Activated CD4-positive, alpha-beta T cell treated with anti-CD3 and anti-CD28 coated beads, Interleukin-2, amount 10 ng/mL, durations not matched to agents 7 days and 5 days (primary cell): ENCODE measurements at regions of chr12 and their contacts with region 1.

Region 1: DNA sequence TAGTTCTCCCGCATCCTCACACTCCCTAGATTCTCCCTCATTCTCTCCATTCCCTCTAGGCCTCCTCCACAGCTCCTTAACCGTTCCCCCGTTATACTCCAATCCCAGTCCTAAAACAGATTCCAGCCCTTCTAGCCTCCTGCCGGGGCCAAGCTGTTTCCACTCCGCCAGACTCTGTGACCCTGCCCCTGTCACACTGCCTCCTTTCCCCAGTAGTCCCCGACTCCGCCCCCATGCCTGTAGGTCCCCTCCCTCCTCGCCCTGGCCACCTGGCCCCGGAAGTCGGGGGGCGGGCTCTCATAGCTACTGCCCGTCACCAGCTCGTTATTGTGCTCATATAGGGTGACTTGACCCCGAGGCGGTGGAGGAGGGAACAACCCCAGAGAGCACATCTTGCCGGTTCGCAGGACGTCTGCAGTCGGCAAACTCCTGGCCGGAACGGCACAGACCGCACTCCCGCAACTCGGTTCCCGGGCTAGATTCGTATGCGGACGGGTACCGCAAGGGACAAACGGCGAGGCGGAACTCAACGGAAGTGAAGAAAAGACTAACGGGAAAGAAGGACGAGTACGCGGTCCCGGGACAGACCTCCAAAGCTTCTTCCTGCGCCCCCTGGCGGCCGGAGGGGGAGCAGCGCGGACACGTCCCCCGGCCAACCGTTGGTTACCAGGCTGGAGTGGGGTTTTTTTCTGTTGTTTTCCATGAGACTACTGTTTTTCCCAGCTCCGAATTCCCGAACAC is at the start of gene AAAS:
- DNase-seq: peak; percentile 98
- H3K4me3 Mint-ChIP-seq: peak within 1 kb of the TSS; percentile 85
- H3K27ac Mint-ChIP-seq: peak within 1 kb of the TSS; percentile 93
- H3K4me1 Mint-ChIP-seq: peaks cover 49% of the 10 kb centered on the region
- H3K27me3 Mint-ChIP-seq: no peaks in the 10 kb centered on the region
- total RNA-seq, gene AAAS: 59.1 to 63.0 TPM

Region 2: GRCh38 chr12:53129170-53129569 is 192.1 kb before region 1 on chr12:
- CTCF ChIA-PET with region 1: no interaction called
- POLR2A ChIA-PET with region 1: no interaction called
- DNase-seq: no peak
- H3K4me3 Mint-ChIP-seq: no peak overlapping the region
- H3K27ac Mint-ChIP-seq: no peak overlapping the region
- H3K4me1 Mint-ChIP-seq: peaks cover 3% of the 10 kb centered on the region
- H3K27me3 Mint-ChIP-seq: peaks cover 4% of the 10 kb centered on the region

Region 3: GRCh38 chr12:53159195-53159839 is 161.9 kb before region 1 on chr12:
- CTCF ChIA-PET with region 1: interaction called, 18 read pairs
- POLR2A ChIA-PET with region 1: no interaction called
- DNase-seq: peak; percentile 93
- H3K4me3 Mint-ChIP-seq: no peak overlapping the region
- H3K27ac Mint-ChIP-seq: peak overlapping the region; percentile 26
- H3K4me1 Mint-ChIP-seq: peaks cover 9% of the 10 kb centered on the region
- H3K27me3 Mint-ChIP-seq: no peaks in the 10 kb centered on the region

Region 4: DNA sequence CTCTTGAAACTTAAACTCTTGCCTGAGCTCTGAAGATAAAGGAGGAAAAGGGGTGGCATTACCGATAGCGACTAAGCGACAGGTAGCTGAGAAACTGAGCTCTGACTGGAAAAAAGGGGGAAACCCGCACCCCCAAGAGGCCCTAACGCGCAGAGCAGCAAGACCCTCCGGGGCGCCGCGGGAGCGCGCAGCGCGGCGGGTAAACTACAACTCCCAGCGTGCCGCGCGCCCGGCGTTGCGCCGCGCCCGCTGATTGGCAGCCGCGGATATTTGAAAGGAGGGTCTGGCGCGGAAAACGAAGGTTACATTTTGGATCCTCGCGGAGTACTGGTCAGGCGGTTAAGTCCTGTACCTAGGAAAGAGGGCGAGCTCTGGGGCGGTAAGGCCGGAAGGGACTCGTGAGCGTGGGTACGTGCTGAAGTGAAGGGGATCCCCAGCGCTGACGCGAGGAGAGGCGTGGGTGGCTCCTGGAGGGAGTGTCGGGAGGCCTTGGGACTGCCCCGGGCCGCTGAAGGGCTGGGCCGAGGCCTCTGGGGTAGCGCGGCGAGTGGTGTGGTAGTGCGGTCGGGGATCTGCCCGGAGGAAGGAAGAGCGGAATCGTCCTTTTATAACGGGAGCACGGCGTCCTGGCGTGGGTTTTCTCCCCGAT is 53.1 kb before region 1 on chr12 and contains the start of gene ESPL1:
- CTCF ChIA-PET with region 1: interaction called, 27 read pairs
- POLR2A ChIA-PET with region 1: no interaction called
- DNase-seq: peak; percentile 85
- H3K4me3 Mint-ChIP-seq: peak within 1 kb of the TSS; percentile 99
- H3K27ac Mint-ChIP-seq: peak within 1 kb of the TSS; percentile 97
- H3K4me1 Mint-ChIP-seq: peaks cover 53% of the 10 kb centered on the region
- H3K27me3 Mint-ChIP-seq: no peaks in the 10 kb centered on the region
- total RNA-seq, gene ESPL1: 107 to 125 TPM

Region 5: DNA sequence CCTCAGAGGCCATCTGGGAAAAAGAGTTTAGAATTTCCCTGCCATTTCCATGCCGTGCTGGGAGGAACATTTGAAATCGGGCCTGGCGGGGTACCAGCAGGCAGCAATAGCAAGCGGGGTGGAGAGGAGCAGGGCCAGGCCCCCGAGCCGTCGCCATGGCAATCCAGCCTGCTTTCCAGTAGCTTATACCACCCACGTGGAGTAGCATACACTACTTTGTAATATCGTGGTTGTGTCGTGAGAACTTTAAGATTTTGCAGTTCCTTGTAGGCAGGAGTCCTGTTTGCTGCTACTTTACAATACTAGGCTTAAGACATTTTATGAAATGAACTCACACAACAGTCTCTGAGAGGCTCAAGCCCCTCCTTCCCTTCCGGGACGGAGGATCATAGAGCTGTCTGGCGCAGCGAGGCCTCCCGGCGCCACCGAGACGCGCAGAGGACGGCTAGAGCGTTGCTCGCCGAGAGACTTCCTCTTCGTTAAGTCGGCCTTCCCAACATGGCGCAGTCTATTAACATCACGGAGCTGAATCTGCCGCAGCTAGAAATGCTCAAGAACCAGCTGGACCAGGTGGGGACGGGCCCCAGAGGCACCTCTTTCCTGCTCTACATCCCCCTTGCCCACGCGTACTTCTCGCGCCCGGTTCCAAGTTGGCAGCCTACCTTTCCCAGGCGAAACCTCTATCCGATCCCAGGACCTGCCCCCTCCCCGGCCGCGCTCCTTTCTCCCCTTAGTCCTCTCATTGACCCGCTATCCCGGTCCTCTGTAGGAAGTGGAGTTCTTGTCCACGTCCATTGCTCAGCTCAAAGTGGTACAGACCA is 26.0 kb before region 1 on chr12 and contains the start of gene PFDN5:
- CTCF ChIA-PET with region 1: interaction called, 30 read pairs
- POLR2A ChIA-PET with region 1: interaction called, 8 read pairs
- DNase-seq: peak; percentile 92
- H3K4me3 Mint-ChIP-seq: peak within 1 kb of the TSS; percentile 97
- H3K27ac Mint-ChIP-seq: peak within 1 kb of the TSS; percentile 91
- H3K4me1 Mint-ChIP-seq: peaks cover 50% of the 10 kb centered on the region
- H3K27me3 Mint-ChIP-seq: no peaks in the 10 kb centered on the region
- total RNA-seq, gene PFDN5: 305 to 335 TPM

Region 6: DNA sequence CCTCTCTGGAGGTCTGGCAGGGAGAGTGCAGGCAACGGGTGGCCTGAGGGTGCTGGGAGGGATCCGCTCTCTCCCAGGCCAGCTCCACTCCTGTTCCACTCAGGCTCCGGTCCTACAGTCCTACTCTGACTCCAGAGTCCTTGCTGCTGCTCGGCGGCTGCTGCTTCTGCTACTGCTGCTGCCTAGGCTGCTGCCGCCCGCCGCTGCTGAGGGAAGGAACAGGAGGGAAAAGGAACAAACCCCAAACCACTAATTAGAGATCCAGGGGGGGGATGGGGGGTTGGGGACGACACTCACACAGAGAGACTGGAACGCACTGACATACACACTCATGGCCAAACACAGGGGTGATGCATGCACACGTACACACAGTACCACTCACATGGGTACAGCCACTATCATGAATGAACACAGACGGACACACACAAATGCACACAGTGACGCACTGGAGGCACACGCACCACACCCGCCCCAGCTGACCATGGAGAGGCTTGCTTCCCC is 15.0 kb after region 1 on chr12 and contains the start of gene SP7:
- CTCF ChIA-PET with region 1: interaction called, 18 read pairs
- POLR2A ChIA-PET with region 1: no interaction called
- DNase-seq: no peak
- H3K4me3 Mint-ChIP-seq: no peak within 1 kb of the TSS
- H3K27ac Mint-ChIP-seq: no peak within 1 kb of the TSS
- H3K4me1 Mint-ChIP-seq: peaks cover 17% of the 10 kb centered on the region
- H3K27me3 Mint-ChIP-seq: peaks cover 53% of the 10 kb centered on the region
- total RNA-seq, gene SP7: not detected

Region 7: GRCh38 chr12:53352331-53353256 is 31.4 kb after region 1 on chr12:
- CTCF ChIA-PET with region 1: interaction called, 48 read pairs
- POLR2A ChIA-PET with region 1: no interaction called
- DNase-seq: peak; percentile 90
- H3K4me3 Mint-ChIP-seq: no peak overlapping the region
- H3K27ac Mint-ChIP-seq: peak overlapping the region; percentile 43
- H3K4me1 Mint-ChIP-seq: peaks cover 12% of the 10 kb centered on the region
- H3K27me3 Mint-ChIP-seq: no peaks in the 10 kb centered on the region

Region 8: DNA sequence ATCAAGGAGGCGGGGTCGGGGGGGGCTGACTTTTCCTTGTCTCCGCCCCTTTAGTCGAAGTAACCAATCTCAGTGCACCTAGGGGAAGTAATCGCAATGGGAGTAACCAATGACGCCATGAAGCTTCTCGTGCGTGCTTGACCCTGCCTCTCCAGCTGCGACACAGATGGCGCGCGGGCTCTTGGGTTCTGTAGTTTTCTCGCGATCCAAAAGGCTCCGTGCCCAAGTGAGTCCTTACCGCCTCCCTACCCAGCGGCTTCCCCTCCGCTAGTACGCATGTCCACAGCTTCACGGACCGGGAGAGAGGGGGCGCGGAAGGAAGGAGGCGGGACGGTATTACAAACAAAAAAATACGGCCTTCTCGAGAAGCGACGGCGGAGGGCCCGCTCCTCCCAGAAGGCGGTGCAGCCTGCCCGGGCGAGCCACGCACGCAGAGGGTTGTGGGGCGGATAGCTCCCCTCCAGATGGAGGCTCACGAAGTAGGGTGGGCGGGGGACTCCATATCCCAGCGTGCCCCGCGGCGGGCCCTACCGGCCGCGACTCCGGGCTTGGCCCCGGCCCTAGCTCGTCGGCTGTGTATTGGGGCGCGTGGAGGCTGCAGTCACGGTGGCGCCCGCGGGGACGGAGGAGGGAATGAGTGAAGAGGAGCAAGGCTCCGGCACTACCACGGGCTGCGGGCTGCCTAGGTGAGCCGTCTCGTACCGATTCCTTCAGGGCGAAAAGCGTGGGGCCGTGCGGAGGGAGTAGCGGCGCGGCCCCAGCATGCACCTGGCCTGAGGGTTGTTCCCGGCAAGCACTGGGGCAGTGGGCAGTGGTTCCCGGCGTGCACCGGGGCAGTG is 179.8 kb after region 1 on chr12 and contains the start of gene TARBP2:
- CTCF ChIA-PET with region 1: interaction called, 11 read pairs
- POLR2A ChIA-PET with region 1: interaction called, 4 read pairs
- DNase-seq: peak; percentile 99
- H3K4me3 Mint-ChIP-seq: peak within 1 kb of the TSS; percentile 89
- H3K27ac Mint-ChIP-seq: peak within 1 kb of the TSS; percentile 98
- H3K4me1 Mint-ChIP-seq: peaks cover 42% of the 10 kb centered on the region
- H3K27me3 Mint-ChIP-seq: no peaks in the 10 kb centered on the region
- total RNA-seq, gene TARBP2: 32.6 to 35.9 TPM

Region 9: GRCh38 chr12:53659011-53659551 is 337.8 kb after region 1 on chr12:
- CTCF ChIA-PET with region 1: no interaction called
- POLR2A ChIA-PET with region 1: no interaction called
- DNase-seq: no peak
- H3K4me3 Mint-ChIP-seq: no peak overlapping the region
- H3K27ac Mint-ChIP-seq: no peak overlapping the region
- H3K4me1 Mint-ChIP-seq: no peaks in the 10 kb centered on the region
- H3K27me3 Mint-ChIP-seq: no peaks in the 10 kb centered on the region